ENCODE measurements at regions of chr13 and their contacts with region 1.

Region 1: GRCh38 chr13:98565726-98566565 is 11.0 kb downstream of the STK24 start:
- DNase-seq: peak in 3 of 14 experiments; percentile 18 to 40 (median 34)
- ATAC-seq: no peak
- H3K4me3 ChIP-seq: peak overlapping the region; percentile 8
- H3K4me3 Mint-ChIP-seq: peak overlapping the region; percentile 80
- H3K27ac ChIP-seq: peak overlapping the region; percentile 58 to 71
- H3K27ac Mint-ChIP-seq: peak overlapping the region; percentile 93
- H3K4me1 ChIP-seq: peaks cover 89% of the 10 kb centered on the region
- H3K4me1 Mint-ChIP-seq: peaks cover 96% of the 10 kb centered on the region
- H3K27me3 ChIP-seq: no peaks in the 10 kb centered on the region
- H3K27me3 Mint-ChIP-seq: no peaks in the 10 kb centered on the region
- CTCF ChIP-seq: no peak

Region 2: DNA sequence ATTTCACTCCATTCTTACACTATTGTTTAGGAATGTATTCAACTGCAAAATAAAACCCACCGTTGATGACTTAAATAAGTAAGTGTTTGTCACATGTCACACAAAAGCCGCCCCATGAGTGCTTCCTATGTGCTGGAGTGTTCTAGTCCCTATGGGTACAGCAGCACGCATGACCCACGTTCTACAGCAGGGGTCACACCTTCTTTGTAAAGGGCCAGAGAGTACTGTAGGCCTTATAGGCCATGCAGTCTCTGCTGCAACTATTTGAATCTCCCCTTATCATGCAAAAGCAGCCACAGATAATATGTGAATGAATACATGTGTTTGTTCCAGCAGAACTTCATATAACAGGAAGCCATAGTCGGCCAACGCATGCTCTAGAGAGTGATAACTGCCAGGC is 220.4 kb before region 1 on chr13:
- CTCF ChIA-PET with region 1: no interaction called
- POLR2A ChIA-PET with region 1: no interaction called
- intact Hi-C with region 1: no loop called
- DNase-seq: peak in 2 of 14 experiments; percentile 6 to 8
- ATAC-seq: no peak
- H3K4me3 ChIP-seq: no peak overlapping the region
- H3K4me3 Mint-ChIP-seq: no peak overlapping the region
- H3K27ac ChIP-seq: no peak overlapping the region
- H3K27ac Mint-ChIP-seq: no peak overlapping the region
- H3K4me1 ChIP-seq: no peaks in the 10 kb centered on the region
- H3K4me1 Mint-ChIP-seq: no peaks in the 10 kb centered on the region
- H3K27me3 ChIP-seq: peaks cover 0 to 2% of the 10 kb centered on the region in 2 experiments
- H3K27me3 Mint-ChIP-seq: peaks cover 9% of the 10 kb centered on the region
- CTCF ChIP-seq: no peak

Region 3: DNA sequence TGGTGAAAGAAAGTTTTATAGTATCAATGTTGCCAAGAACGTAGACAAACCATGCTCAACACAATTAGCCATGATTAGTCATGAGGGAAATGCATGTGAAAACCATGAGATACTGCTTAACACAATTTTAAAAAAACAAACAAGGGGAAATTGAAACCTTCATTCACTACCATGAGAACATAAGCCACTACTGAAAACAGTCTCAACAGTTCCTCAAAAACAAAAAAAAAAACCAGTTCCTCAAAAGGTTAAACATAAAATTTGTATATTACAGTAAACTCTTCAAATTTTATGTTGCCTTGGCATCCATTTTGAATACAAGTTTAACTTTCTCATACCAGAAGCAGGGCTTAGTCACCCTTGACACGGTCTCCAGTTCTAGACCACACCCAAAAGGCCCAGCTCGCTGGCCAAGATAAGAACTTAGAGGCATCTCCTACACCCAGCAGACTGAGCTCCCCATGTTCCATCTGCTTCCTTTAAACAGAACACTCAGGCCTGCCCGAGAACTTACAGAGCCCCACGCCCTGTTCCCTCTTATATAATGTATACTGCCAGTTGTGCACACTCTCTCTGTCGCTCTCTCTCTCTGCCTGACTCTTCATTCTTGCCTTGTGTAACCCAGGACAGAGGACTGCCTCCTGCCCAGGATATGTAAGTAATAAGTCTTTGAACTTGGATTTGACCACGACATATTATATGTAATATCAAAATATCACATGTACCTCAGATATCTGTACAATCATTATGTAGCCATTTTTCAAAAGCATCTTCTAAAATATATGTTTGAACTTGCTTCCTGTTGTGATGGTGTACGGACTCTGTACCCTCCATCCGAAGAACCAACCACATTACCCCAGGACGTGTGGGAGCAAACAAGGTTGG is 56.4 kb before region 1 on chr13:
- CTCF ChIA-PET with region 1: interaction called, 3 read pairs
- POLR2A ChIA-PET with region 1: interaction called, 3 read pairs
- intact Hi-C with region 1: loop called (anchors 5 kb)
- DNase-seq: peak in 9 of 14 experiments; percentile 15 to 80 (median 36)
- ATAC-seq: peak; percentile 71
- H3K4me3 ChIP-seq: no peak overlapping the region
- H3K4me3 Mint-ChIP-seq: peak overlapping the region; percentile 4
- H3K27ac ChIP-seq: peak overlapping the region in 1 of 2 donors; percentile 9
- H3K27ac Mint-ChIP-seq: peak overlapping the region; percentile 82
- H3K4me1 ChIP-seq: peaks cover 68% of the 10 kb centered on the region
- H3K4me1 Mint-ChIP-seq: peaks cover 96% of the 10 kb centered on the region
- H3K27me3 ChIP-seq: no peaks in the 10 kb centered on the region
- H3K27me3 Mint-ChIP-seq: no peaks in the 10 kb centered on the region
- CTCF ChIP-seq: no peak

Region 4: DNA sequence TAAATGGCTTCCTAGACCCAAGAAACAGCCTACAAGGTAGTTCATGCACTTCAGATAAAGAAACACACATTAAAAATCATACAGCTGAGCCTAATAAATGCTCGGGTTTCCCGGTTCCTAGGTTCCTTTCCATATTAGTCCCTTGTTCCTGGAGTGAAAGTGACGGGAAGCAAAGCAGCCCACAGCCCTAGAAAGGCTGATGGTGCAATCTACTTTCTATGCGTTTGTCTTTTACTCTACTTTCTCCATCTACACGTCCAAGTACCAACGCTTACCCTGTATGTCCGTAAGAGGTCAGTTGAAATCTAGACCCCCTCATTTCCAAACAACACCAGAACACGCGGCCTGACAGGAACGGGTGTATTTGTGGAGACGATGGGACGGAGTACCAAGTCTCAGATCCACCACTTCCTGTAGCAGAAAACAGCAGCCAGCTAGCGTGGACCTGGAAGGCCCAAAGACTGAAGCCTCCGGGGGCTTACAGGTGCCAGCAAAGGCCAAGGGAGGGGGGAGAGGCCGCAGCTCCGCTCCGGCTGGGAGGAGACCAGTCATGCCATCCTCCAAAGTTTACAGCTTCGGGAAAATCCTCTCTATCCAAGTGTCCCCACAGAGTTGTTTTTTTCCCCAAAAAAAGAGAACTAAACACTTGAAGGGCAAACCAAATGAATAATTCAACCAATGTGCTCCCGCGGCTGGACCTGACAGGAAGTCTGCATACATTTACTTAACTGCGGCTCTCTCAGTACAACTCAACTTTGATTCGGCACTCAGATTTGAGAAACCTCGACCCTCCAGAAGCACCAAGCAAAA is 23.2 kb before region 1 on chr13:
- CTCF ChIA-PET with region 1: interaction called, 3 read pairs
- POLR2A ChIA-PET with region 1: interaction called, 20 read pairs
- intact Hi-C with region 1: no loop called
- DNase-seq: peak in 3 of 14 experiments; percentile 47 to 58 (median 49)
- ATAC-seq: peak; percentile 61
- H3K4me3 ChIP-seq: peak overlapping the region; percentile 37
- H3K4me3 Mint-ChIP-seq: peak overlapping the region; percentile 65
- H3K27ac ChIP-seq: peak overlapping the region in 1 of 2 donors; percentile 28
- H3K27ac Mint-ChIP-seq: peak overlapping the region; percentile 63
- H3K4me1 ChIP-seq: peaks cover 77% of the 10 kb centered on the region
- H3K4me1 Mint-ChIP-seq: peaks cover 94% of the 10 kb centered on the region
- H3K27me3 ChIP-seq: no peaks in the 10 kb centered on the region
- H3K27me3 Mint-ChIP-seq: no peaks in the 10 kb centered on the region
- CTCF ChIP-seq: no peak

Region 5: GRCh38 chr13:99075268-99076191 is 509.6 kb after region 1 on chr13:
- CTCF ChIA-PET with region 1: no interaction called
- POLR2A ChIA-PET with region 1: no interaction called
- intact Hi-C with region 1: loop called in 1 of 2 experiments (anchors 10 kb)
- DNase-seq: peak in 3 of 14 experiments; percentile 58 to 81 (median 62)
- ATAC-seq: peak; percentile 76
- H3K4me3 ChIP-seq: peak overlapping the region; percentile 24
- H3K4me3 Mint-ChIP-seq: peak overlapping the region; percentile 18
- H3K27ac ChIP-seq: peak overlapping the region; percentile 37 to 61
- H3K27ac Mint-ChIP-seq: peak overlapping the region; percentile 84
- H3K4me1 ChIP-seq: peaks cover 45% of the 10 kb centered on the region
- H3K4me1 Mint-ChIP-seq: peaks cover 92% of the 10 kb centered on the region
- H3K27me3 ChIP-seq: no peaks in the 10 kb centered on the region
- H3K27me3 Mint-ChIP-seq: no peaks in the 10 kb centered on the region
- CTCF ChIP-seq: no peak

Region 6: DNA sequence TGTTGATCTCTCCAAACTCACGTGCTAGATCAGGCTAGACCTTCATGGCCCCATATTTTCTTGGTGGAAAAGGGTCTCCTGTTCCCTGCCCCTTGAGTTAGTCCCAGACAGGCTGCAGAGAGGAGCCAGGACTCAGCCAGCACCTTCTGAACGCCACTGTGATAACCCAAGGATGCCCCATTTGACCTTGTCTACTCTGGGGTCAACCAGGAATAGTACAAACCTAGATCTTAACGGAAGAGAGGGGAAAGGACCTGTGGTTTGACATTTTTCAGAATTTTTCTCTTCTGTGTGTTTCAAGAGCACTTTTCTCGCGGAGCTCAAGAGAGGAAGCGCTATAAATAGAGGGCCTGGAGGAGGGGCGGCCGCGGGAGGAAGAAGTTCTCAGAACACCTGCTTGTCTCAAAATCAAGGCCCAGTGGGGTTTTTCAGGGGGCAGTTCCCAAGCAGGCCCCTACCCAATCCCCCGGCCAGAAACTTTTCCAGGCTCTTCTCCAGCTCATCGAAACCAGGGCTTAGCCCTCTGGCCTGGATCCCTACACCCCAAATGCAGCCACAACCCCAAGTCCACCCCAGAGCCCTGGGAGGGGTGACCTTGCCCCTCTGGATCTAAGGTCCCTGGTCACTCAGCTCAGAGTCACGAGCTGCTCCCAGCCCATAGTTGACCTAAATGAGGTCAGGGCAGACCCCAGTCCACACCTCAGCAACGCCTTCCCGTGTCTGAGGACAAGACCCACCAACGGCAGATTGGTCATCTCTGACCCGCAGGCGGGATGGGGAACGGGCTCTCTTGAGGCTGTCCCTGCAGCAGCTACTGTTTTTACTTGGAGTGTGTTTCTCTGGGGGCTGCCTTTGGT is 859.8 kb after region 1 on chr13:
- CTCF ChIA-PET with region 1: no interaction called
- POLR2A ChIA-PET with region 1: no interaction called
- intact Hi-C with region 1: no loop called
- DNase-seq: peak in 13 of 14 experiments; percentile 31 to 78 (median 62)
- ATAC-seq: peak; percentile 53
- H3K4me3 ChIP-seq: peak overlapping the region; percentile 15
- H3K4me3 Mint-ChIP-seq: peak overlapping the region; percentile 64
- H3K27ac ChIP-seq: peak overlapping the region; percentile 81 to 87
- H3K27ac Mint-ChIP-seq: peak overlapping the region; percentile 92
- H3K4me1 ChIP-seq: peaks cover 67% of the 10 kb centered on the region
- H3K4me1 Mint-ChIP-seq: peaks cover 72% of the 10 kb centered on the region
- H3K27me3 ChIP-seq: no peaks in the 10 kb centered on the region
- H3K27me3 Mint-ChIP-seq: no peaks in the 10 kb centered on the region
- CTCF ChIP-seq: no peak

Measured in CD4-positive, alpha-beta T cell (primary cell).